Posterior vena cava (tissue), 2 donors: ENCODE measurements at regions of chr20 and their contacts with region 1.

Region 1: GRCh38 chr20:2210646-2211552 is 84.9 kb upstream of the TGM3 start:
- DNase-seq: peak; percentile 82

Region 2: GRCh38 chr20:2144850-2145249 is 66.0 kb before region 1 on chr20:
- intact Hi-C with region 1: loop called in 1 of 2 experiments (anchors 2 kb)
- DNase-seq: no peak

Region 3: GRCh38 chr20:2430538-2430937 is 219.6 kb after region 1 on chr20:
- intact Hi-C with region 1: loop called in 1 of 2 experiments (anchors 10 kb)
- DNase-seq: no peak